Psoas muscle (tissue), 8 donors: ENCODE measurements at regions of chr18 and their contacts with region 1.

Region 1: GRCh38 chr18:77132371-77133050 is at the start of gene MBP:
- DNase-seq: peak; percentile 60 to 81
- ATAC-seq: peak; percentile 28 to 66 (median 52)
- H3K4me3 ChIP-seq: peak within 1 kb of the TSS; percentile 89
- H3K27ac ChIP-seq: peak within 1 kb of the TSS; percentile 95
- H3K4me1 ChIP-seq: peaks cover 34% of the 10 kb centered on the region
- H3K27me3 ChIP-seq: no peaks in the 10 kb centered on the region
- CTCF ChIP-seq: no peak
- total RNA-seq, gene MBP: 51.6 to 88.2 (median 78.6) TPM

Region 2: DNA sequence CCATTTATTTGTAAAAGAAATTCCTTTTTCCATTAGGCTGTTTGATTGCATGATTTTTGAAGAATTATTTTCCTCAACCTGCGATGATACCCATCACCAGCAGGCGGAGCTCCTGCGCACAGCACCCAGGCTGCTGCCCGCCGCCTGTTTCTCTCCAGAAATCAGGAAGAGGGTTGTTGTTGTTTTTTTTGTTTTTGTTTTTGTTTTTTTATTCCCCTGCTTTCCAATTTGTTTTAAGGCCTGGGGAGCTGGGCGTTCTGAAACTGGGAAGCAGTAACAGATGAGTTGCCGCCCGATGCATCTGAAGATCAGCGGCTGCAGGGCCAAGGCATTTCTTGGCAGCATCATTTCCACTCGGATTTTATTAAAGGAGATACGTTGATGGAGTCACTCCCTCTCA is 132.0 kb before region 1 on chr18:
- intact Hi-C with region 1: loop called in 1 of 2 experiments (anchors 10 kb)
- DNase-seq: peak; percentile 58 to 75
- ATAC-seq: peak; percentile 34 to 74 (median 61)
- H3K4me3 ChIP-seq: peak overlapping the region; percentile 43
- H3K27ac ChIP-seq: no peak overlapping the region
- H3K4me1 ChIP-seq: peaks cover 4% of the 10 kb centered on the region
- H3K27me3 ChIP-seq: no peaks in the 10 kb centered on the region
- CTCF ChIP-seq: peak; percentile 99

Region 3: GRCh38 chr18:77054606-77055428 is 77.7 kb before region 1 on chr18:
- intact Hi-C with region 1: loop called in 1 of 2 experiments (anchors 5 kb)
- DNase-seq: peak; percentile 82 to 91
- ATAC-seq: peak; percentile 80 to 84 (median 82)
- H3K4me3 ChIP-seq: peak overlapping the region; percentile 27
- H3K27ac ChIP-seq: peak overlapping the region; percentile 83
- H3K4me1 ChIP-seq: peaks cover 63% of the 10 kb centered on the region
- H3K27me3 ChIP-seq: no peaks in the 10 kb centered on the region
- CTCF ChIP-seq: peak; percentile 67

Region 4: DNA sequence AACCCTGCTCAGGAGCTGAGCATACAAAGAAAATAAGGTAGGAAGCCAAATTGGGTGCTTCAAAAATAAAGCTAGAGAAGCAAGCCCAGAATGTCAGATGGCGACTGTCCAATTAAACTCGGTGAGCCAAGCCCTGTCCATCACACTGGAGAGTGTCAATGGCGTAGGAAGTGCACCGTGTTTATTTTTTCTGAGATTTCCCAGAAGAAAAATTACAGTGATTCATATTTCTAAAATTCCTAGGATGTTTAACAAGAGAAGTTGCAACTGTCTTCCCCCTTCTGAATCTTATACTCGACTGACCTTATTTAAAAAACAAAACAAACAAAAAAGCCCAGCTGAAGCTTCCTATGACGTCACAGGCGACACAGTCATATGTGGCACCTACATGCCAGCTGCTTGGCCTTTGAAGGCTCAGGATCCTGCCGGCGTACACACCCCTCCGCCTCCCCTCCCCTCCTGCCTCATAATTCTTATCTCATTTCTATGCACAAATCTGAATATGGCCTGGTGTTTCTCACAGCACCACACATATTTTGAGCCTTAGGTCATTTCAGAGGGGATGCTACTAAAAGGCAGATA is 60.7 kb before region 1 on chr18:
- intact Hi-C with region 1: loop called in 1 of 2 experiments (anchors 5 kb)
- DNase-seq: no peak
- ATAC-seq: peak in 1 of 4 donors; percentile 28
- H3K4me3 ChIP-seq: no peak overlapping the region
- H3K27ac ChIP-seq: peak overlapping the region; percentile 54
- H3K4me1 ChIP-seq: peaks cover 60% of the 10 kb centered on the region
- H3K27me3 ChIP-seq: no peaks in the 10 kb centered on the region
- CTCF ChIP-seq: no peak

Region 5: DNA sequence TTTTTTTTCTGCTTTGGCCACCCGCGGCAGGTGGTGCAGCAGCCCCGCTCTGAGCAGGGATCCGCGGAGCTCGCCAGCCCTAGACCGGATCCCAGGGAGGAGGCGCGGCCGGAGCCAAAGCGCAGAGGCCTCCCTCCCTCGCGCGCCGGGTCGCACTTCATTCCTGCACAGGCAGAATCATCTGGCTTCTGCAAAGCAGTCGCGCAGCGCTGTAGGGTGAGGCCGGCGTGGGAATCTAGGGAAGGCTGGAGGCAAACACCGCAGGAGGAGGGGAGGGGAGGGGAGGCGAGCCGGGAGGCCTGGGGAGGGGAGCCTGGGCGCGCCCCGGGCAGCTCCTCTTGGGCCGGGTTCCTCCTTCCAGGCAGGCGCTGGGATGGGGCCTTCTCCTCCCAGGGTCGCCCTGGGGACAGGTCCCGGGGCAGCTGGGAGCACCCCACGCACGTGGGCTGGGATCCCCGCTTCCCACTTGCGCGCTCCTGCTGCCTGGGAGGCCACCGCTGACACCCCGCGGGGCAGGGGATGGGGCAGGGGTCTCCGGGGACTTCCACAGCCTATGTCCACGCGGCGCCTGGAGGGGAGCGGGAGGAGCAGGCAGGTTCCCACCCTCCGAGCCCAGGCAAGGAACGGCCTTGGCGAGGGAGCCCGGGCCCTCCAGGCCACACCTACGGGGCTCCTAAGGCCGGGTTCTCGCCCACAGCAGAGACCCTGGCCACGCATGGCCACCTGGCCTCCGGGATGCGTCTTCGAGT is 44.9 kb before region 1 on chr18:
- intact Hi-C with region 1: loop called in 1 of 2 experiments (anchors 2 kb)
- DNase-seq: peak; percentile 64 to 75
- ATAC-seq: peak; percentile 29 to 54 (median 42)
- H3K4me3 ChIP-seq: peak overlapping the region; percentile 65
- H3K27ac ChIP-seq: peak overlapping the region; percentile 88
- H3K4me1 ChIP-seq: peaks cover 85% of the 10 kb centered on the region
- H3K27me3 ChIP-seq: no peaks in the 10 kb centered on the region
- CTCF ChIP-seq: no peak

Region 6: GRCh38 chr18:77099485-77100370 is 32.8 kb before region 1 on chr18:
- intact Hi-C with region 1: loop called in 1 of 2 experiments (anchors 5 kb)
- DNase-seq: peak in 1 of 2 donors; percentile 58
- ATAC-seq: no peak
- H3K4me3 ChIP-seq: no peak overlapping the region
- H3K27ac ChIP-seq: peak overlapping the region; percentile 77
- H3K4me1 ChIP-seq: peaks cover 57% of the 10 kb centered on the region
- H3K27me3 ChIP-seq: no peaks in the 10 kb centered on the region
- CTCF ChIP-seq: no peak

Region 7: GRCh38 chr18:77207540-77207939 is 75.0 kb after region 1 on chr18:
- intact Hi-C with region 1: loop called (anchors 2 to 5 kb)
- DNase-seq: peak; percentile 81 to 82
- ATAC-seq: peak; percentile 47 to 75 (median 69)
- H3K4me3 ChIP-seq: no peak overlapping the region
- H3K27ac ChIP-seq: peak overlapping the region; percentile 76
- H3K4me1 ChIP-seq: peaks cover 24% of the 10 kb centered on the region
- H3K27me3 ChIP-seq: no peaks in the 10 kb centered on the region
- CTCF ChIP-seq: peak; percentile 54

Region 8: GRCh38 chr18:77448046-77448445 is 315.5 kb after region 1 on chr18:
- intact Hi-C with region 1: no loop called
- DNase-seq: no peak
- ATAC-seq: no peak
- H3K4me3 ChIP-seq: no peak overlapping the region
- H3K27ac ChIP-seq: no peak overlapping the region
- H3K4me1 ChIP-seq: no peaks in the 10 kb centered on the region
- H3K27me3 ChIP-seq: no peaks in the 10 kb centered on the region
- CTCF ChIP-seq: no peak